Activated B cell treated with CpG ODN at 0.5 μM for 24 hours (primary cell): ENCODE measurements at regions of chr7 and their contacts with region 1.

Region 1: GRCh38 chr7:25179771-25180591 is 48.3 kb downstream of the NPVF start:
- DNase-seq: peak; percentile 100
- ATAC-seq: peak; percentile 97
- H3K4me3 Mint-ChIP-seq: peak overlapping the region; percentile 87
- H3K27ac Mint-ChIP-seq: peak overlapping the region; percentile 95
- H3K4me1 Mint-ChIP-seq: peaks cover 15% of the 10 kb centered on the region
- H3K27me3 Mint-ChIP-seq: no peaks in the 10 kb centered on the region
- CTCF ChIP-seq: peak; percentile 46

Region 2: GRCh38 chr7:24715661-24716479 is 464.1 kb before region 1 on chr7:
- CTCF ChIA-PET with region 1: no interaction called
- POLR2A ChIA-PET with region 1: interaction called, 7 read pairs
- intact Hi-C with region 1: loop called (anchors 1 kb)
- DNase-seq: no peak
- ATAC-seq: no peak
- H3K4me3 Mint-ChIP-seq: peak overlapping the region; percentile 64
- H3K27ac Mint-ChIP-seq: peak overlapping the region; percentile 61
- H3K4me1 Mint-ChIP-seq: peaks cover 65% of the 10 kb centered on the region
- H3K27me3 Mint-ChIP-seq: no peaks in the 10 kb centered on the region
- CTCF ChIP-seq: no peak

Region 3: DNA sequence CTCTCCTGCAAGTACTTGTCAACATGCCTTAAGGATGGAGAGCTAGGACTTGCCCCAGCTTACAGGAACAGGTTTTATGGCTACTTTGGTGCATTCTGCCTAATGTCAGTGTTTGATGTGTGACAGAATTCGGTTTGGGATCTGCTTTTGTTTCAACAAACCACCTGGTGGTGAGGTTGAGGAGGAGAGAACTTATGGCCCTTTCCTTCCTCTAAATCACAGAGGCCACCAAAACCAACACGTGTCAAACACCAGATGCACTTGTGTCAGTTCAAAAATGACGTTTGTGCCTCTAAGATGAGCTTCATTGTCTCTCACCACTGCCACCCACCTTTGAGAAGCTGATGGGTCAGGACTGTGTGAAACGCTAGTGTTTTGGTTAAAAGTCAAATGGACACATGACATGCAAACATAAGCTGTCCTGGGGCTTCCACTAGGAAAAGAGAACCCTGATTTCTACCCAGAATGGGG is 283.9 kb before region 1 on chr7:
- CTCF ChIA-PET with region 1: no interaction called
- POLR2A ChIA-PET with region 1: no interaction called
- intact Hi-C with region 1: no loop called
- DNase-seq: no peak
- ATAC-seq: peak; percentile 69
- H3K4me3 Mint-ChIP-seq: no peak overlapping the region
- H3K27ac Mint-ChIP-seq: peak overlapping the region; percentile 42
- H3K4me1 Mint-ChIP-seq: peaks cover 61% of the 10 kb centered on the region
- H3K27me3 Mint-ChIP-seq: no peaks in the 10 kb centered on the region
- CTCF ChIP-seq: no peak

Region 4: GRCh38 chr7:25117226-25118047 is 62.5 kb before region 1 on chr7:
- CTCF ChIA-PET with region 1: no interaction called
- POLR2A ChIA-PET with region 1: interaction called, 4 read pairs
- intact Hi-C with region 1: loop called (anchors 2 kb)
- DNase-seq: no peak
- ATAC-seq: peak; percentile 91
- H3K4me3 Mint-ChIP-seq: peak overlapping the region; percentile 75
- H3K27ac Mint-ChIP-seq: peak overlapping the region; percentile 88
- H3K4me1 Mint-ChIP-seq: peaks cover 43% of the 10 kb centered on the region
- H3K27me3 Mint-ChIP-seq: no peaks in the 10 kb centered on the region
- CTCF ChIP-seq: no peak

Region 5: GRCh38 chr7:25158966-25159365 is 21.0 kb before region 1 on chr7:
- CTCF ChIA-PET with region 1: interaction called, 3 read pairs
- POLR2A ChIA-PET with region 1: no interaction called
- intact Hi-C with region 1: loop called (anchors 1 kb)
- DNase-seq: no peak
- ATAC-seq: no peak
- H3K4me3 Mint-ChIP-seq: no peak overlapping the region
- H3K27ac Mint-ChIP-seq: no peak overlapping the region
- H3K4me1 Mint-ChIP-seq: peaks cover 1% of the 10 kb centered on the region
- H3K27me3 Mint-ChIP-seq: no peaks in the 10 kb centered on the region
- CTCF ChIP-seq: no peak

Region 6: DNA sequence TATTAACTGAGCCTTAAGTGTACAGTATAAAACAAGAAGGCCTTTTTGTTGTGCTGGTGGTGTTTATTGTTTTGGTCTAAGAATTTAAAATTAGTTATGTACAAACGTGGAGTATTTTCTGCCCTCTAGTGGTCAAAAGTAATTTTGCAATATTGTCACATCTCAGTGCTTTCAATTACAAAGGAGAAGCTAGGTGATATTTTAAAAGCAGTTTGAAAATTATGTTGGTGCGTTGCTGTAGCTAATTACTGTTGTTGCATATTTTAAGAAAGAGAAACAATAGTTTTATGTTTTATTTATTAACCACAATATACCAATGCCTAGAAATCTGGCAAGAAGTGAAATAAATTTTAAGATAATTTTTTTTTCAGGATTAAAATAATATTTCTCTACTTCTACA is 36.9 kb after region 1 on chr7:
- CTCF ChIA-PET with region 1: no interaction called
- POLR2A ChIA-PET with region 1: no interaction called
- intact Hi-C with region 1: loop called (anchors 2 kb)
- DNase-seq: no peak
- ATAC-seq: no peak
- H3K4me3 Mint-ChIP-seq: no peak overlapping the region
- H3K27ac Mint-ChIP-seq: no peak overlapping the region
- H3K4me1 Mint-ChIP-seq: no peaks in the 10 kb centered on the region
- H3K27me3 Mint-ChIP-seq: peaks cover 20% of the 10 kb centered on the region
- CTCF ChIP-seq: peak; percentile 37